Posterior cingulate gyrus (tissue), 11 donors: ENCODE measurements at regions of chr2 and their contacts with region 1.

Region 1: GRCh38 chr2:46666044-46666679 is 186.8 kb downstream of the TMEM247 start:
- DNase-seq: peak in 1 of 10 donors; percentile 76

Region 2: GRCh38 chr2:46776687-46777327 is 110.6 kb after region 1 on chr2:
- intact Hi-C with region 1: loop called (anchors 10 kb)
- DNase-seq: peak in 2 of 10 donors; percentile 31 to 52